Left colon (tissue), 2 donors: ENCODE measurements at regions of chr1 and their contacts with region 1.

Region 1: DNA sequence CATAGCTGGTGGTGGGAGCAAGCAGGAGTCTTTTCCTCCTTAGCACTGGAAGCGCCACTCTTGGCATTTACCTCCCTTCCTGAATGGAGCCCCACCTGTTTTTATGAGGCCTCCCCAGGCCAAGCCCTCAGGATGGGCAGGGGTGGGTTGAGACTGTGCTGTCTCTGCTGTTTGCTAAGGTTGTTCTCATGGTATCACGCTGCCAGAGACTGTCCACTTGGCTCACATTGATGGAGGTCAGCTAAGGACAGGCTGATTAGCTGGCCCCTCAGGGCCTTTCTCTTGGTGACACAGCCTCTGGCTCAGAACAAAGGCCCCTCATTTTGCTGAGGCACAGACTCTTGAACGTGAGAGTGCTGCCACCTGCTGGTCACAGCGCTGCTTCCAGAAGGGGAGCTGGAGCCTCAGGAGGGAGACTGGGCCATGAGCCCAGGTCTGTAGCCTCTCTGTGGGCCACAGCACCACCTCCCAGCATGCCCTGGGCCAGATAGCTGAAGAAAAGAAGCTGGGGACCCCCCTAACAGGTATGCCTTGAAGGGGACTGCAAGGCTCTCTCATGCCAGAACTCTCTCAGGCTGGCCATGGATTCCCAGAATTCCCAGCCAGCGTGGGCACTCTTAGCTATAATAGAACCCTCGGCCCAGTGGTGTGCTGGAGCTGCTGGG is 85.6 kb downstream of the CD58 start:
- DNase-seq: peak; percentile 89 to 97
- ATAC-seq: peak; percentile 79

Region 2: GRCh38 chr1:115839029-115839678 is 646.0 kb before region 1 on chr1:
- intact Hi-C with region 1: no loop called
- DNase-seq: peak in 1 of 2 donors; percentile 19
- ATAC-seq: peak; percentile 41

Region 3: DNA sequence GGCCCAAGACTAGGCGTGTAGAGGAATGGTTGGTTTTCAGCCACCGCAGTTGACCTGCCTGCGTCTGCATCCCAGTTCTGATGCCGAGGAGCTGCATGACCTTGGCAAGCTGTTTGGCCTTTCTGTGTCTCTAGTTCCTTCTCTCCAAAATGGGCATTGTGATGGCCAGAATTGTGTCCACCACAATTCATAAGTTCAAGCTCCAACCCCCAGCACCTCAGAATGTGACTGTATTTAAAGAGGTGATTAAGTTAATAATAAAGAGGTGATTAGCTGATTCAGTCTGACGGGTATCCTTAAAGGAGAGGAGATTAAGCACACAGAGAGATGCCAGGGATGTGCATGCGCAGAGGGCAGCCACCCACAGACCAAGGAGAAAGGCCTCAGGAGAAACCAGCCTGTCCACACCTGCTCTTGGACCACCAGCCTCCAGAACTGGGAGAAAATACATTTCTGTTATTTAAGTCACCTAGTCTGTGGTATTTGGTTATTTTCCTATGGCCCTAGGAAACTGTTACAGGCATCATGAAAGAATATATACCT is 345.5 kb before region 1 on chr1:
- intact Hi-C with region 1: loop called (anchors 5 kb)
- DNase-seq: no peak
- ATAC-seq: no peak

Region 4: GRCh38 chr1:116360429-116361173 is 124.6 kb before region 1 on chr1:
- intact Hi-C with region 1: loop called in 1 of 2 experiments (anchors 5 kb)
- DNase-seq: no peak
- ATAC-seq: peak; percentile 58

Region 5: DNA sequence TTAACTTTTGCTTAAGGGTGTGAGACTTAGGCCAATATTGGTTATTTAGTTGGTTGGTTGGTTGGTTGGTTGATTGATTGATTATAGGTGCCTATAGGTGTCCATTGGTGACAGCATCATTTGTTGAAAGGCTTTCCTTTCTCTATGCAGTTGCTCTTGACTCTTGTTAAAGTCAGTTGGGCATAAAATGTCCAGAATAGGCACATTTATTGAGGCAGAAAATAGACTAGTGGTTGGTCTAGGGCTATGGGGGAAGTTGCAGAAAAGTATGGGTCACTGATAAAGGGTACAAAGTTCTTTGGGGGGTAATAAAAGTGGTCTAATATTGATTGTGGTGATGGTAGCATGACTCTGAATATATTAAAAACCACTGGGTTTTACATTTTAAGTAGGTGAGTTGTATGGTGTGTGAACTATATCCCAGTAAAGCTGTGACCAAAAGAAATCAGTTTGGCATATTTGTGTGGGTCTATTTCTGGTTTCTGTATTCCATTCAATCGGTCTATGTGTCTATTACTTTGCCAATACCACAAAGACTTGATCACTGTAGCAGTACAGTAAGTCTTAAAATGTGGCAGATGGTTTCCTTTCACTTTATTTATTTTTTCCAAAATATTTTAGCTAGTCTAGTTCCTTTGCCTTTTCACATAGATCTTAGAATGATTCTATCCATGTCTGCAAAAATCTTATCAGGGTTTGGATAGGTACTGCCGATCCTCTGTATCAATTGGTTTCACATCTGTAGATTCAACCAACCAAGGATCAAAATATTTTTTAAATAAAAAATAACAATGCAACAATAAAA is 49.2 kb before region 1 on chr1:
- intact Hi-C with region 1: loop called in 1 of 2 experiments (anchors 5 kb)
- DNase-seq: no peak
- ATAC-seq: no peak